ENCODE measurements at regions of chr10 and their contacts with region 1.

Region 1: GRCh38 chr10:72048450-72049124 is 39.8 kb downstream of the SPOCK2 start:
- DNase-seq: peak; percentile 86 to 100 (median 96)

Region 2: GRCh38 chr10:71319042-71319799 is 729.4 kb before region 1 on chr10 and contains the start of gene SLC29A3:
- intact Hi-C with region 1: loop called (anchors 10 kb)
- DNase-seq: peak; percentile 59 to 97 (median 83)

Region 3: GRCh38 chr10:71893920-71894319 is 154.7 kb before region 1 on chr10:
- intact Hi-C with region 1: loop called (anchors 2 kb)
- DNase-seq: peak in 2 of 10 donors; percentile 19 to 61

Region 4: DNA sequence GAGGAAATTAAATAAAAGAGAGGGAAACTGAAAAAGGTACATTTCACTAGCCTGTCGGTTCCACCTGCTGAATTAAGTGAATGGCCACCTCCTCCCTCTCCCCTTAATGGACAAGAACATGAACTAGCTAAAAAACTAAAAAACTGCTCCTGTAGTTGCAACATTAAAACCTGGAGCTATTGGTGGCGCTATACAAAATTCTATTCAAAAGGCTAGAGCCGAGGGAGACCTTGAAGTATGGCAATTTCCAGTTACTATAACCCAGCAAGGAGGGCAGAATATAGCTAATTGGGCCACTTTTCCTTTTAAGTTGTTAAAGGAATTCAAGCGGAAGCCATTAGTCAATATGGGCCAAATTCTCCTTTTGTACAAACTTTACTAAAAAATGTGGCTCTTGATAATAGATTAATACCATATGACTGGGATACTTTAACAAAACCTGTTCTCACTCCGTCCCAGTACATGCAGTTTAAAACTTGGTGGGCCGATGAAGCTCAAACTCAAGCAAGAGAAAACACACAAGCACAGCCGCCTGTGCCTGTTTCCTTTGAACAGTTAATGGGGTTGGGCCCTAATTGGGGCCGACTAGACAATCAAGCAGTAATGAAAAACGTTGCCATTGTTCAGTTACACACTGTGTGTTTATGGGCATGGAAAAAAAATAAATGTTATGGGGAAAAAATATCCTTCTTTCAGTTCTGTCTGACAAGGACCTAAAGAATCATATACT is 90.9 kb before region 1 on chr10:
- intact Hi-C with region 1: loop called (anchors 1 kb)
- DNase-seq: no peak

Region 5: GRCh38 chr10:72223743-72224101 is 175.1 kb after region 1 on chr10:
- intact Hi-C with region 1: loop called (anchors 5 kb)
- DNase-seq: peak in 1 of 10 donors; percentile 30

Measured in posterior cingulate gyrus (tissue), 11 donors.